ENCODE measurements at regions of chrX and their contacts with region 1.

Region 1: GRCh38 chrX:56563231-56564161 is at the start of gene UBQLN2:
- DNase-seq: peak; percentile 51 to 88 (median 77)
- ATAC-seq: peak; percentile 78
- H3K4me3 ChIP-seq: peak within 1 kb of the TSS; percentile 77 to 83
- H3K4me3 Mint-ChIP-seq: peak within 1 kb of the TSS; percentile 94
- H3K27ac ChIP-seq: peak within 1 kb of the TSS; percentile 93 to 94
- H3K27ac Mint-ChIP-seq: peak within 1 kb of the TSS; percentile 99
- H3K4me1 ChIP-seq: no peaks in the 10 kb centered on the region
- H3K4me1 Mint-ChIP-seq: peaks cover 22% of the 10 kb centered on the region
- H3K27me3 ChIP-seq: no peaks in the 10 kb centered on the region
- H3K27me3 Mint-ChIP-seq: no peaks in the 10 kb centered on the region
- CTCF ChIP-seq: no peak
- total RNA-seq, gene UBQLN2: 34.3 to 35.6 TPM

Region 2: GRCh38 chrX:54808605-54809483 is 1754.7 kb before region 1 on chrX:
- CTCF ChIA-PET with region 1: no interaction called
- POLR2A ChIA-PET with region 1: no interaction called
- intact Hi-C with region 1: loop called in 1 of 2 experiments (anchors 10 kb)
- DNase-seq: peak; percentile 73 to 96 (median 85)
- ATAC-seq: peak; percentile 71
- H3K4me3 ChIP-seq: peak overlapping the region; percentile 92 to 96
- H3K4me3 Mint-ChIP-seq: peak overlapping the region; percentile 93
- H3K27ac ChIP-seq: peak overlapping the region; percentile 92
- H3K27ac Mint-ChIP-seq: peak overlapping the region; percentile 95
- H3K4me1 ChIP-seq: peaks cover 13% of the 10 kb centered on the region
- H3K4me1 Mint-ChIP-seq: peaks cover 21% of the 10 kb centered on the region
- H3K27me3 ChIP-seq: no peaks in the 10 kb centered on the region
- H3K27me3 Mint-ChIP-seq: no peaks in the 10 kb centered on the region
- CTCF ChIP-seq: no peak

Region 3: DNA sequence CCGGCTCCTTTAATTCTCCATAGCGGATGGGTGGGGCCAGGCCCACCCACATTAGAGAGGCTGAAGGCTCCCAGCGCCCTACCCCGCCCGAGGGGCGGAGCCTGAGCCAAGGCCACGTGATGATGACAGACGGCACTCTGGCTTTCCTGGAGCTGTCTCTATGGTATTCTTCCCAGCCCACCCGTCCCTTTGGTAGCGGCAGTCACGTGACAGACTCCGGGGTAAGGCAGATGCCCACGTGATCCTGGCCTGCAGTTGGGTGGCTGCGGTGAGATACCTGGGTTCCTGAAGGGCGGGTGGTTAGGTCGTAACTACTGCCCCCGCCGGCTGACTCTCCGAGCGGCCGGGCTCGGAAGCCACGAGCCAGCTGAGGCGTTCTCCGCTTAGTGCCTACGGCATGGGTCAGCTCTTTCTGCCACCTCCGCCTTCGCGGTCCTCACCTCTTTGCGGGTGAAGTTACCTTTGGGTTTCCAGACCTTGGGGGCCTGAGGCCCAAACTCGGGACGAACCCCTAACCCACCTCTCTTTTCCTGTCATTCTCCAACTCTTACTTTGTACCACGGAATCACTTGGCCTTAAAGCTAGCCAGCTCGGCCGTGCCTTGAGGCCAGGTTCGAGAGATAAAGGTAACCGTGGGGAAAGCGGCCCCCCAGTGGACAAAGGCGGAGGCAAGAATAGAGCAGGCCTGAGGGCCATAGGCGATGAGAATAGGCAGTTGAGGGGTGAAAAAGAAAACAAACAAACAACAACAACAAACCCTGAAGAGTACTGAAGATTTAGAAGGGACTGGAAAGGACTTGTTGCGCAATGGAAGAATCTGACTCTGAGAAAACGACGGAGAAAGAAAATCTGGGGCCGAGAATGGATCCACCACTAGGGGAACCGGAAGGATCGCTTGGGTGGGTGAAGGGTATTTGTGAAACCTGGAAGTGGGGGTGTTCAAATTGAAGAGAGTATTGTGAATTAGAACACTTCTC is 845.7 kb before region 1 on chrX and contains the start of gene RRAGB:
- CTCF ChIA-PET with region 1: no interaction called
- POLR2A ChIA-PET with region 1: no interaction called
- intact Hi-C with region 1: loop called (anchors 1 to 10 kb)
- DNase-seq: peak; percentile 78 to 96 (median 89)
- ATAC-seq: peak; percentile 98
- H3K4me3 ChIP-seq: peak within 1 kb of the TSS; percentile 76 to 88
- H3K4me3 Mint-ChIP-seq: peak within 1 kb of the TSS; percentile 75
- H3K27ac ChIP-seq: peak within 1 kb of the TSS; percentile 87 to 93
- H3K27ac Mint-ChIP-seq: peak within 1 kb of the TSS; percentile 92
- H3K4me1 ChIP-seq: peaks cover 14% of the 10 kb centered on the region
- H3K4me1 Mint-ChIP-seq: peaks cover 37% of the 10 kb centered on the region
- H3K27me3 ChIP-seq: no peaks in the 10 kb centered on the region
- H3K27me3 Mint-ChIP-seq: no peaks in the 10 kb centered on the region
- CTCF ChIP-seq: peak; percentile 58
- total RNA-seq, gene RRAGB: 4.9 to 6.6 TPM

Region 4: DNA sequence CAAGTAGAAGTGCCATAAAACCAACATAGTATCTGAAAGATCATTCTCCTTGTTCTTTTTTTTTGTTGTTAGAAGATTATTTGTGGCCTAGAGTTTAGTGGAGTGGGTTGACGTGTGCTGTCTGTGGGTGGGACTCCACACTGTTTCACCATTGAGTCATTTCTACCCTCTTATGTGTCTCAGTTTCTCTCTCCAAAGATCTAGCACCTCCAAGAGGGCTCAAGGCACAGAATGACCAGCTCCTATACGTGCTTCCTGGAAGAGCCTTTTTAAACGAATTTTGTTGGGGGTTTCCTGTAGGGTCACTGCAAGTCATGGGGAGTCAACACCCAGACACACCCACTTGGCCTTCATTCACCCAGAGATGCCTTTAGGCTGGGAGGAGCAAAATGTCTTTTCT is 181.2 kb before region 1 on chrX:
- CTCF ChIA-PET with region 1: no interaction called
- POLR2A ChIA-PET with region 1: no interaction called
- intact Hi-C with region 1: loop called in 1 of 2 experiments (anchors 10 kb)
- DNase-seq: no peak
- ATAC-seq: no peak
- H3K4me3 ChIP-seq: no peak overlapping the region
- H3K4me3 Mint-ChIP-seq: no peak overlapping the region
- H3K27ac ChIP-seq: no peak overlapping the region
- H3K27ac Mint-ChIP-seq: peak overlapping the region; percentile 12
- H3K4me1 ChIP-seq: peaks cover 33% of the 10 kb centered on the region
- H3K4me1 Mint-ChIP-seq: peaks cover 43% of the 10 kb centered on the region
- H3K27me3 ChIP-seq: no peaks in the 10 kb centered on the region
- H3K27me3 Mint-ChIP-seq: no peaks in the 10 kb centered on the region
- CTCF ChIP-seq: no peak

Region 5: GRCh38 chrX:56623316-56623715 is 59.8 kb after region 1 on chrX:
- CTCF ChIA-PET with region 1: no interaction called
- POLR2A ChIA-PET with region 1: no interaction called
- intact Hi-C with region 1: no loop called
- DNase-seq: no peak
- ATAC-seq: no peak
- H3K4me3 ChIP-seq: no peak overlapping the region
- H3K4me3 Mint-ChIP-seq: no peak overlapping the region
- H3K27ac ChIP-seq: no peak overlapping the region
- H3K27ac Mint-ChIP-seq: no peak overlapping the region
- H3K4me1 ChIP-seq: no peaks in the 10 kb centered on the region
- H3K4me1 Mint-ChIP-seq: no peaks in the 10 kb centered on the region
- H3K27me3 ChIP-seq: no peaks in the 10 kb centered on the region
- H3K27me3 Mint-ChIP-seq: no peaks in the 10 kb centered on the region
- CTCF ChIP-seq: no peak

Region 6: GRCh38 chrX:56813318-56813837 is 249.9 kb after region 1 on chrX:
- CTCF ChIA-PET with region 1: no interaction called
- POLR2A ChIA-PET with region 1: no interaction called
- intact Hi-C with region 1: loop called (anchors 5 to 10 kb)
- DNase-seq: peak in 8 of 9 experiments; percentile 27 to 88 (median 59)
- ATAC-seq: peak; percentile 79
- H3K4me3 ChIP-seq: peak overlapping the region; percentile 0 to 12
- H3K4me3 Mint-ChIP-seq: peak overlapping the region; percentile 78
- H3K27ac ChIP-seq: peak overlapping the region; percentile 57 to 90
- H3K27ac Mint-ChIP-seq: peak overlapping the region; percentile 98
- H3K4me1 ChIP-seq: peaks cover 26% of the 10 kb centered on the region
- H3K4me1 Mint-ChIP-seq: peaks cover 43% of the 10 kb centered on the region
- H3K27me3 ChIP-seq: no peaks in the 10 kb centered on the region
- H3K27me3 Mint-ChIP-seq: no peaks in the 10 kb centered on the region
- CTCF ChIP-seq: no peak

Region 7: DNA sequence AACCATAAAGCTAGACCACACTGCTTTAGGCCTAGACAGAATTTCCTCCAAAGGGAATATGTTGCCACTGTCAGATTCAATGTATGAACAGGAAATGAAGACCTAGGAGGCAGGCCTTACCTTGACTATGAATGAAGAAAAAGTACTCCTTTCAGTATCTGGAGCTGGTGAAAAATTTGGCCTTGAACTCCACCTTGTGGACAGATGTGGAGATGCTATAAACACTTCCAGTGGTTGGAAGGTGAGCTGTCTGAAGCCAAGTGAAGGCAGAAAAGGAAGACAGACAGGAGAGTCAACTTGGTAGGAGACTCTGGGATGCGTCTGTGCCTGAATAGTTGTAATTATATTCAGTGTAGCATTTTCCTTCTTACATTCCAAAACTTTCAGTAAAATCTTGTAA is 414.7 kb after region 1 on chrX:
- CTCF ChIA-PET with region 1: no interaction called
- POLR2A ChIA-PET with region 1: no interaction called
- intact Hi-C with region 1: no loop called
- DNase-seq: peak in 8 of 9 experiments; percentile 5 to 69 (median 35)
- ATAC-seq: peak; percentile 88
- H3K4me3 ChIP-seq: no peak overlapping the region
- H3K4me3 Mint-ChIP-seq: no peak overlapping the region
- H3K27ac ChIP-seq: no peak overlapping the region
- H3K27ac Mint-ChIP-seq: no peak overlapping the region
- H3K4me1 ChIP-seq: no peaks in the 10 kb centered on the region
- H3K4me1 Mint-ChIP-seq: peaks cover 3% of the 10 kb centered on the region
- H3K27me3 ChIP-seq: no peaks in the 10 kb centered on the region
- H3K27me3 Mint-ChIP-seq: no peaks in the 10 kb centered on the region
- CTCF ChIP-seq: peak; percentile 66

Region 8: GRCh38 chrX:57595381-57595811 is 1031.9 kb after region 1 on chrX:
- CTCF ChIA-PET with region 1: no interaction called
- POLR2A ChIA-PET with region 1: no interaction called
- intact Hi-C with region 1: loop called in 1 of 2 experiments (anchors 10 kb)
- DNase-seq: peak in 2 of 9 experiments; percentile 27 to 47
- ATAC-seq: no peak
- H3K4me3 ChIP-seq: no peak overlapping the region
- H3K4me3 Mint-ChIP-seq: peak overlapping the region; percentile 73
- H3K27ac ChIP-seq: no peak overlapping the region
- H3K27ac Mint-ChIP-seq: peak overlapping the region; percentile 49
- H3K4me1 ChIP-seq: peaks cover 20% of the 10 kb centered on the region
- H3K4me1 Mint-ChIP-seq: peaks cover 42% of the 10 kb centered on the region
- H3K27me3 ChIP-seq: no peaks in the 10 kb centered on the region
- H3K27me3 Mint-ChIP-seq: no peaks in the 10 kb centered on the region
- CTCF ChIP-seq: no peak

Measured in CD8-positive, alpha-beta T cell (primary cell).